Left lung (tissue), 14 donors: ENCODE measurements at regions of chr14 and their contacts with region 1.

Region 1: DNA sequence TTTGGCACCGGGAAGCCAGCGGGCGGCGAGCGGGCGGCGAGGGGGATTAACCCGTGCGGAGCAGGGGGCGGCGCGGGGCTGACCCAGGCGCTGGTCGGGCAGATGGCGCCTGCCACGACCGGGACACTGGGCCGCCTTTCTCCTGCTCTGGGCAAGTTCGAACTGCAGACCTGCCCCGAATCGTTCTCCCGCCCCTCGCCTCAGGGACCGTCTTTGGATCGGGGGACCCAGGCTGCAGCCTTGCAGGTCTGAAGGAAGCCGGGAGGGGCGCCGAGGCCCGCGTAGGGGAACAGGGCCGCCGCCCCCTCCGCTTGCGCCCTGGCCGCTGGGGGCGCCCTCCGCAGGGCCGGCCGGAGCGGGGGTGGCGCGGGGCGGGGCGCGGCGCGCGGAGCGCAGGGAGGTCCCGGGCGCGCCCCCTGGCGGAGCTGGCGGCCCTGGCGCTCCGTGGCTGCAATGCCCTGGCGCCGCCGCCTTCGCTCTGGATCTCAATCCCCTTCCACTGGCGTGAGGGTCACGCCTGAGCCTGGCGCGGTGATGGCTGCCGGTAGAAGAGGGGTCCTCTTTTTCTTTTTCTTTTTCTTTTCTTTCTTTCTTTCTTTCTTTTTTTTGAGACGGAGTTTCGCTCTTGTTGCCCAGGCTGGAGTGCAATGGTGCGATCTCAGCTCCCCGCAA is 449 bp upstream of the LTBP2 start:
- DNase-seq: peak; percentile 75 to 96 (median 80)
- ATAC-seq: peak; percentile 89
- H3K4me3 ChIP-seq: peak overlapping the region; percentile 49 to 69
- H3K27ac ChIP-seq: peak overlapping the region in 1 of 2 donors; percentile 54
- H3K4me1 ChIP-seq: peaks cover 5 to 56% of the 10 kb centered on the region in 2 donors
- H3K27me3 ChIP-seq: peaks cover 12 to 35% of the 10 kb centered on the region in 2 donors
- CTCF ChIP-seq: peak; percentile 71 to 74

Region 2: GRCh38 chr14:74501135-74501614 is 111.3 kb before region 1 on chr14:
- intact Hi-C with region 1: loop called in 1 of 2 experiments (anchors 10 kb)
- DNase-seq: peak in 3 of 4 donors; percentile 62 to 88 (median 67)
- ATAC-seq: peak; percentile 86
- H3K4me3 ChIP-seq: no peak overlapping the region
- H3K27ac ChIP-seq: no peak overlapping the region
- H3K4me1 ChIP-seq: peaks cover 0 to 5% of the 10 kb centered on the region in 2 donors
- H3K27me3 ChIP-seq: no peaks in the 10 kb centered on the region
- CTCF ChIP-seq: peak; percentile 44 to 46

Region 3: GRCh38 chr14:74542056-74542685 is 70.3 kb before region 1 on chr14:
- intact Hi-C with region 1: no loop called
- DNase-seq: no peak
- ATAC-seq: no peak
- H3K4me3 ChIP-seq: no peak overlapping the region
- H3K27ac ChIP-seq: no peak overlapping the region
- H3K4me1 ChIP-seq: no peaks in the 10 kb centered on the region
- H3K27me3 ChIP-seq: no peaks in the 10 kb centered on the region
- CTCF ChIP-seq: no peak

Region 4: GRCh38 chr14:74804219-74804826 is 191.8 kb after region 1 on chr14:
- intact Hi-C with region 1: loop called in 1 of 2 experiments (anchors 10 kb)
- DNase-seq: peak in 1 of 4 donors; percentile 32
- ATAC-seq: peak; percentile 72
- H3K4me3 ChIP-seq: no peak overlapping the region
- H3K27ac ChIP-seq: no peak overlapping the region
- H3K4me1 ChIP-seq: no peaks in the 10 kb centered on the region
- H3K27me3 ChIP-seq: no peaks in the 10 kb centered on the region
- CTCF ChIP-seq: peak; percentile 30 to 41